Aorta (tissue), 5 donors: ENCODE measurements at regions of chr4 and their contacts with region 1.

Region 1: DNA sequence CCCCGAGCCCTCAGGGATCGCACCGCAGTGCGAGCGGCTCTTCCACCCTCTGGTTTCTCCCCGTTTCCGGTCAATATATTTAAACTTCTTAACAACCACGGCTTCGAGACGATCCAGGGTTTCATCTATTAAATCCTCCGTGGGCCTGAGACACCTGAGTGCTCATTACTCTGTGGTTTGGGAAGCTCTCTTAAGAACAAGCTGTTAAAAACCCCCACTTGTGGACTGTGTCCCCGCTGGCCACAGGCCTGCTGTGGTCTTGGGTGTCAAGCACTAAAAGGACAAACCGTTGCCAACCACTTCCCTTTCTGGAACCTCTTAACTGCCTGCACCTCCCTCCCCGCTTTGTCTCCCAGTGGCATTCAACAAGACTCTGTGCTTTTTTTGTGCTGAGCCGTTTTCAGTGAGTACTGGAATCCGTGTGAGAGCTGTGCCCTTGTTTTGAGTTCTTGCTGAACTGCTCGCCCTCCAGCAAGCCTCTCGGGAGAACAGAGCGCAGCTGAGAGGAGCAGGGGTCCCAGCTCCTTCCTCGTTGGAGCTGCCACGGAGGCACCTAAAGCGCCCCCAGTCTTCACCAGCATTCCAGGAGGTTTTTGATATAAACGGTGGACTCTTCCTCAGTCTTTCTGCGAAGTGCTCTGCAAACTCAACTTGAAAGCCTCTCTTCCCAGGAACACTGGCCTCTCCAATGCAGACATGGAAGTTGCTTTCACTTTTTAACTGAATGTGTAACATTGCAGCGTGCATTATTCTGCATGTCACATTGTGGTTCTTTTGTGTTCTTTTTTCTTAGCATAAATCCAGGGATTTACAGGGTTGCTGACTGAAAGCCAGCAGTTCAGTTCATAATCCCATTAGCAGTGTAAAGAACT is 691 bp upstream of the IGFBP7 start:
- DNase-seq: peak in 1 of 2 donors; percentile 77
- ATAC-seq: peak; percentile 69
- H3K4me3 ChIP-seq: peak overlapping the region; percentile 71 to 79
- H3K27ac ChIP-seq: peak overlapping the region; percentile 81 to 96
- H3K4me1 ChIP-seq: no peaks in the 10 kb centered on the region
- H3K27me3 ChIP-seq: no peaks in the 10 kb centered on the region

Region 2: DNA sequence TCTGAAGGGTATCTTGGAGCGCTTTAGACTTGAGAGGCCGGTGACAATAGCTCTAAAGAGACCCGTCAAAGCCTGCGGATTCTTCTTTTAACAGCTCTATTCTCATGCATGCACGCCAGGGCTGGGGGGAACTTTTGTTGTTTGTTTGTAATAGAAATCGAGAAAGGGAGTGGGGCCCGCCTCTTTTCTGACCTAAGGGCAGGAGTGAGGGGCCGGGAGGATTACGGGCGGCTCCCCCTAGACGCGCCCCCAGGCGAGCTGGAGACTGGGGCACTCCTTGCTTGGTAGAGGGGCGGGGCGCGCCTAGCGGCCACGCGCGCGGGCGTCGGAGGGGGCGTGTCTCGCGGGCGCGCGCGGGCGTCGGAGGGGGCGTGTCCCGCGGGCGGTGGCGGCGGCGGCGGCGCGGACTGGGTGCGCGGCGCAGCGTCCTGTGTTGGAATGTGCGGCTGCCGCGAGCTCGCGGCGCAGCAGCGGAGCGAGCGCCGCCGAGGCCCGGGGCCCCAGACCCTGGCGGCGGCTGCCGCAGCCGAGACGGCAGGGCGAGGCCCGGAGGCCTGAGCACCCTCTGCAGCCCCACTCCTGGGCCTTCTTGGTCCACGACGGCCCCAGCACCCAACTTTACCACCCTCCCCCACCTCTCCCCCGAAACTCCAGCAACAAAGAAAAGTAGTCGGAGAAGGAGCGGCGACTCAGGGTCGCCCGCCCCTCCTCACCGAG is 203.2 kb before region 1 on chr4 and contains the start of gene REST:
- intact Hi-C with region 1: loop called in 1 of 2 experiments (anchors 10 kb)
- DNase-seq: peak; percentile 81 to 92
- ATAC-seq: peak; percentile 94
- H3K4me3 ChIP-seq: peak within 1 kb of the TSS; percentile 82 to 95
- H3K27ac ChIP-seq: peak within 1 kb of the TSS; percentile 71 to 97
- H3K4me1 ChIP-seq: peaks cover 0 to 3% of the 10 kb centered on the region in 2 donors
- H3K27me3 ChIP-seq: no peaks in the 10 kb centered on the region
- total RNA-seq, gene REST: 33.5 to 39.1 TPM

Region 3: DNA sequence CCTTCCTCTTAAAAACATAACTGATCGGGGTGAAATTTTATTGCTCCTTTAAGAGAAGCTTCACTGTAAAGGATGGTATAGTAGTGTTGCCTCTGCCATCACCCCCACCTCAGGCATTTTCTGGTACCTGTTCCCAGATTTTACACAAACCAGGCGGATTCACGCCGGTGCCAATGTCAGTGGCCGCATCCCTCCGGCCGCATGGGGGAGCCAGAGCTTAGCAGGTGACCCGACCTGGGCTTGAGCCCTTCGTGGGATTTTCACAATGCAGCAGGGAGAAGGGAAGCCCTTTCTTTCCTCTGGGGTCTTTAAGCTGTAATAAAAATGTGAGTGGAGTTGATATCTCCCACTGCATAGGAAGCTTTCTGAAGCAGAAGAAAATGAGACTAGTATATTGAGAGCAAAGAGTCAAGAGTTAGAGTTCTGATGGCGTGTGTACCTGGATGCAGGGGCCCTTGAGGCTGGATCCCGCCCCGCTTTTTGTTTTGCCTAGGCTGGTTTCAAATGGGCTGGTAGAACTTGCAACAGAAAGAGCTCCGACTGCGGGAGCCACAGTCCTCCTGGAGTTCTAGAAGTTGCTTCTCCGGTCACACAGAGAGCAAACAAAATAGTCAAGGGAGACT is 72.8 kb before region 1 on chr4:
- intact Hi-C with region 1: loop called in 1 of 2 experiments (anchors 2 kb)
- DNase-seq: peak; percentile 67 to 91
- ATAC-seq: peak; percentile 70
- H3K4me3 ChIP-seq: no peak overlapping the region
- H3K27ac ChIP-seq: peak overlapping the region in 1 of 2 donors; percentile 16
- H3K4me1 ChIP-seq: peaks cover 0 to 5% of the 10 kb centered on the region in 2 donors
- H3K27me3 ChIP-seq: no peaks in the 10 kb centered on the region

Region 4: DNA sequence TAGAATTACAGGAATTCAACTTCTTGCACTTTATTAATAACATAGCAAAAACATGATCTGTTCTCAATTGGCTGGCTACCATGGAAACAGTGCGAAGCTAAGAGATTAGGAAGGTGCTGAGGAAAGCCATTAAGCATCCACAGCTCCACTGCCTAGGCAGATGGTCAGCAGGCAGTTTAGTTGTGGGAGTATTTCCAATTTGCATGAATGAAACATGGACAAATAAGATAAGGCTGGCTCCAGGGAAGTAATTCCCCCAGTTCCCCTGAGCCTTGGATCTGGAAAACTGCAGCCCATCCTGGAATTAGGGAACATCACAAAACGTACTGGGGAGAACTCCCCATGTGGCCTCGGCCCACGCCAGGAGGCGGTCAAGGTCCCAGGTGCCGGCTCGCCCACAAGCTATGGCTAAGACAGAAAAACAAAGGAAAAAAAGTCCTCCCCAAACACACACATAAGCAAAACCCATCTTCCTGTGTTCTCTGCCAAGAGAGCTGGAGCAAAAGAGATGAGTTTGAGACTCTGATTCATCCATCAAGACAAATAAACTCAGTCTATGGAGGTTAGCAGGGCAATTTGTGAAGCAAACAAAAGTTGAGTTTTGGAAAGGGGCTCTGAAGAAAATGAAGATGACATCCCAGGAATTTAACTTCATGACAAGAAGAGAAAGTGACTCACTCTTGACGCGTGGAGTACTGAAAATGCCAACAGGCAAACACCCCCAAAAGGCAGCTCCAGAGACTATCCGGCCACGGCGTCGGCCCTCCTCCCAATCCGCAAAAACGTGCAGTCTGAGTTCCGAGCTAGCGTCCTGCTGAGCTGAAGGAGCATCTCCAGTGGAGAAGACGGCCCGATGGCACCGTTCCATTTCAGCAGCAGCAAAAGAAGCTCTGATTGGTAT is 45.8 kb before region 1 on chr4:
- intact Hi-C with region 1: loop called in 1 of 2 experiments (anchors 5 kb)
- DNase-seq: peak; percentile 71 to 85
- ATAC-seq: peak; percentile 79
- H3K4me3 ChIP-seq: no peak overlapping the region
- H3K27ac ChIP-seq: peak overlapping the region; percentile 65 to 81
- H3K4me1 ChIP-seq: peaks cover 2 to 18% of the 10 kb centered on the region in 2 donors
- H3K27me3 ChIP-seq: no peaks in the 10 kb centered on the region

Region 5: DNA sequence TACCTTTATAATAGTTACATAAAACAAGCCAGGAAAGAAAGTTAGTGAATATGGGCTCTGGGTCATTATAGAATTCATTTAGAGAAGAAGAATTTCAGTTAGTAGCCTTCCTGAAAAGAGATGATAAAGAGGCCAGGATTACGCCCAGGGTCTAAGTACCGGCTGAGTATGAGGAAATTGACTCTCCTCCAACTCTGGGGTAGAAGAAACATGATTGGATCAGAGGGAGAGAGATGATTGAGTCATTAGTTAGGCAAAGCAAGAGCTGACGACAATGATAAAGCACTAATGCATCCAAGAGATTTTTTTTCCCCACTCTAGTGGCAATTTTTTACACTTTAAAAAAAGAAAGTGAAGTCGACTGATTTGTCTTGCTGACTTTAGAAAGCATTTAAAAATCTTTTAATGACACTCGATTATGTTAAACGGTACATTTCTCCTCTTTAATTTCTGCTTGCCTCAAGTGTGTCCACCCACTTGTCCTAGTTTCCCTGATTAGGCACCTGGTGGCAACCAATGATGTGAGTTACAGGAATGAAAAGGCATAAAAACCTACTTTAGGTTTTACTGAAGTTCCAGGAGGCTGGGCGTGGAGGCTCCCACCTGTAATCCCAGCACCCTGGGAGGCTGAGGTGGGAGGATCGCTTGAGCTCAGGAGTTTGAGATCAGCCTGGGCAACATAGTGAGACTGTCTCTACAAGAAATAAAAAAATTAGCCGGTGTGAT is 36.6 kb after region 1 on chr4:
- intact Hi-C with region 1: loop called (anchors 5 kb)
- DNase-seq: no peak
- ATAC-seq: no peak
- H3K4me3 ChIP-seq: no peak overlapping the region
- H3K27ac ChIP-seq: no peak overlapping the region
- H3K4me1 ChIP-seq: no peaks in the 10 kb centered on the region
- H3K27me3 ChIP-seq: no peaks in the 10 kb centered on the region